ENCODE measurements at regions of chr1 and their contacts with region 1.

Region 1: GRCh38 chr1:26695356-26696118 is at the start of gene ARID1A:
- DNase-seq: peak; percentile 93 to 98 (median 95)
- ATAC-seq: peak; percentile 60
- H3K4me3 ChIP-seq: peak within 1 kb of the TSS; percentile 89
- H3K4me3 Mint-ChIP-seq: peak within 1 kb of the TSS; percentile 92
- H3K27ac ChIP-seq: peak within 1 kb of the TSS; percentile 71 to 88
- H3K27ac Mint-ChIP-seq: peak within 1 kb of the TSS; percentile 96
- H3K4me1 ChIP-seq: peaks cover 40% of the 10 kb centered on the region
- H3K4me1 Mint-ChIP-seq: peaks cover 36% of the 10 kb centered on the region
- H3K27me3 ChIP-seq: no peaks in the 10 kb centered on the region
- H3K27me3 Mint-ChIP-seq: no peaks in the 10 kb centered on the region
- CTCF ChIP-seq: no peak
- total RNA-seq, gene ARID1A: 102 to 103 TPM

Region 2: DNA sequence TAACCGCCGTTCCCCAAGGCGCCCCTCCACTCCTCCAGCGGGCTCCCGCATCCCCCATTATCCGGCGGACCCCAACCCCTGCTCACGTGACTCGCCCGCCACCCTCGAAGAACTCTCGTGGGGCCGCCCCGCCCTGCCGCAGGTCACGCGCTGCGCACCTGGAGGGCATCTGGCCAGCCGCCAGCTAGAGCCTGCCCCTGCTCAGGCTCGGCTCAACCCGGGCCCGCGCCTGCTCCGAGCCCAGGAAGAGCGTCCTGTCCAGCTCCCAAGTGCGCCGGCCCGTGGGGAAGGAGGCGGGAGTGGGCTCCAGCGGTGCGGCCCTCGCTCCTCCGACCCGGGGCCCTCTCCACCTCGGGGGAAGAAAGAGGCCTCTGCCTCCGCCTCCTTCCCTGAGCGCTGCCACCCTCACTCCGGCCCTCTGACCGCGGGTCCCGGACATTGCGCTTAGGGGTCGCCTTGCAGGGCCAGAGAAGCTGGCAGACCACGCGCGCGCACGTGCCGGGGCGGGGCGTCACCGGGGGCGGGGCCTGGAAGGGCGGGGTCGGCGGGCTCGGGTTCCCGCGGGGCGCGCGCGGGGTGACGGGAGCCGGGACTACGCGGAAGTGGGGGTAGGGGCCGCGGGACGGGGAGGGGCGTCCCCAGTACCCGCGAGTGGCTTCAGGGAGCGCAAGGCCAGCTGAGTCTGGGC is 194.9 kb before region 1 on chr1:
- CTCF ChIA-PET with region 1: interaction called, 3 read pairs
- POLR2A ChIA-PET with region 1: interaction called, 17 read pairs
- intact Hi-C with region 1: loop called in 1 of 2 experiments (anchors 2 kb)
- DNase-seq: peak; percentile 77 to 94 (median 88)
- ATAC-seq: peak; percentile 71
- H3K4me3 ChIP-seq: peak overlapping the region; percentile 76
- H3K4me3 Mint-ChIP-seq: peak overlapping the region; percentile 81
- H3K27ac ChIP-seq: peak overlapping the region; percentile 91 to 94
- H3K27ac Mint-ChIP-seq: peak overlapping the region; percentile 73
- H3K4me1 ChIP-seq: peaks cover 27% of the 10 kb centered on the region
- H3K4me1 Mint-ChIP-seq: peaks cover 14% of the 10 kb centered on the region
- H3K27me3 ChIP-seq: no peaks in the 10 kb centered on the region
- H3K27me3 Mint-ChIP-seq: no peaks in the 10 kb centered on the region
- CTCF ChIP-seq: peak; percentile 54

Region 3: GRCh38 chr1:26677306-26678115 is 18.0 kb before region 1 on chr1:
- CTCF ChIA-PET with region 1: interaction called, 55 read pairs
- POLR2A ChIA-PET with region 1: interaction called, 34 read pairs
- intact Hi-C with region 1: loop called in 1 of 2 experiments (anchors 2 kb)
- DNase-seq: peak in 13 of 14 experiments; percentile 28 to 87 (median 50)
- ATAC-seq: peak; percentile 94
- H3K4me3 ChIP-seq: no peak overlapping the region
- H3K4me3 Mint-ChIP-seq: peak overlapping the region; percentile 42
- H3K27ac ChIP-seq: no peak overlapping the region
- H3K27ac Mint-ChIP-seq: no peak overlapping the region
- H3K4me1 ChIP-seq: peaks cover 13% of the 10 kb centered on the region
- H3K4me1 Mint-ChIP-seq: peaks cover 19% of the 10 kb centered on the region
- H3K27me3 ChIP-seq: no peaks in the 10 kb centered on the region
- H3K27me3 Mint-ChIP-seq: no peaks in the 10 kb centered on the region
- CTCF ChIP-seq: peak; percentile 53

Region 4: DNA sequence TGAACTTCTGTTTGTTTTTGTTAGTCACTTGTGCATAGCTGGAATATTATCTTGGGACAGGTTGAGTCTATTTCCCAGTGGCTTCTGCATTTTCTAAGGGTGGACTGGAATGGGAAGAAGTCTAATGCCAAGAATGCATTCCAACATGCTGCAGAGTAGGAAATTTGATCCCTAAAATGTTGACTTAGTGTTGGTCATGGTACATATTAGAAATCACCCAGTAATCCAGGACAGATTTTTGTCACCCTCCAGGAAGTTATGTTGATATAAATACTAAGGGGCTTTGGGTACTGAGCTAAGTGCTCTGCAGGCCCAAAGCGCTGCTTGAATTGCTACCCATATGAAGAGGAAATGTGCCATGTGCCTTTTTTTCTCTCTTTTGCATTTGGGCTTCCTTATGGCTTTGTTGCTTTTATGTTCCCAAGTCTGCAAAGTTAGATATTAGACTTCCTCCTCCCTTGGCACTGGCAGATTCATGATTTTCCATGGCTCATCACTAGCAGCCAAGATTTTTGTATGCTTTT is 10.3 kb after region 1 on chr1:
- CTCF ChIA-PET with region 1: interaction called, 7 read pairs
- POLR2A ChIA-PET with region 1: interaction called, 58 read pairs
- intact Hi-C with region 1: no loop called
- DNase-seq: no peak
- ATAC-seq: no peak
- H3K4me3 ChIP-seq: no peak overlapping the region
- H3K4me3 Mint-ChIP-seq: peak overlapping the region; percentile 57
- H3K27ac ChIP-seq: no peak overlapping the region
- H3K27ac Mint-ChIP-seq: peak overlapping the region; percentile 56
- H3K4me1 ChIP-seq: peaks cover 72% of the 10 kb centered on the region
- H3K4me1 Mint-ChIP-seq: peaks cover 42% of the 10 kb centered on the region
- H3K27me3 ChIP-seq: no peaks in the 10 kb centered on the region
- H3K27me3 Mint-ChIP-seq: no peaks in the 10 kb centered on the region
- CTCF ChIP-seq: no peak

Region 5: GRCh38 chr1:26728645-26729044 is 33.1 kb after region 1 on chr1:
- CTCF ChIA-PET with region 1: interaction called, 12 read pairs
- POLR2A ChIA-PET with region 1: interaction called, 29 read pairs
- intact Hi-C with region 1: no loop called
- DNase-seq: no peak
- ATAC-seq: no peak
- H3K4me3 ChIP-seq: no peak overlapping the region
- H3K4me3 Mint-ChIP-seq: no peak overlapping the region
- H3K27ac ChIP-seq: peak overlapping the region in 1 of 2 donors; percentile 31
- H3K27ac Mint-ChIP-seq: peak overlapping the region; percentile 85
- H3K4me1 ChIP-seq: peaks cover 59% of the 10 kb centered on the region
- H3K4me1 Mint-ChIP-seq: peaks cover 99% of the 10 kb centered on the region
- H3K27me3 ChIP-seq: no peaks in the 10 kb centered on the region
- H3K27me3 Mint-ChIP-seq: no peaks in the 10 kb centered on the region
- CTCF ChIP-seq: no peak

Region 6: GRCh38 chr1:26744075-26744959 is 48.8 kb after region 1 on chr1:
- CTCF ChIA-PET with region 1: interaction called, 7 read pairs
- POLR2A ChIA-PET with region 1: interaction called, 202 read pairs
- intact Hi-C with region 1: loop called (anchors 2 kb)
- DNase-seq: peak; percentile 53 to 96 (median 70)
- ATAC-seq: peak; percentile 94
- H3K4me3 ChIP-seq: peak overlapping the region; percentile 27
- H3K4me3 Mint-ChIP-seq: peak overlapping the region; percentile 57
- H3K27ac ChIP-seq: peak overlapping the region; percentile 72 to 80
- H3K27ac Mint-ChIP-seq: peak overlapping the region; percentile 87
- H3K4me1 ChIP-seq: peaks cover 88% of the 10 kb centered on the region
- H3K4me1 Mint-ChIP-seq: peaks cover 89% of the 10 kb centered on the region
- H3K27me3 ChIP-seq: no peaks in the 10 kb centered on the region
- H3K27me3 Mint-ChIP-seq: no peaks in the 10 kb centered on the region
- CTCF ChIP-seq: no peak

Region 7: DNA sequence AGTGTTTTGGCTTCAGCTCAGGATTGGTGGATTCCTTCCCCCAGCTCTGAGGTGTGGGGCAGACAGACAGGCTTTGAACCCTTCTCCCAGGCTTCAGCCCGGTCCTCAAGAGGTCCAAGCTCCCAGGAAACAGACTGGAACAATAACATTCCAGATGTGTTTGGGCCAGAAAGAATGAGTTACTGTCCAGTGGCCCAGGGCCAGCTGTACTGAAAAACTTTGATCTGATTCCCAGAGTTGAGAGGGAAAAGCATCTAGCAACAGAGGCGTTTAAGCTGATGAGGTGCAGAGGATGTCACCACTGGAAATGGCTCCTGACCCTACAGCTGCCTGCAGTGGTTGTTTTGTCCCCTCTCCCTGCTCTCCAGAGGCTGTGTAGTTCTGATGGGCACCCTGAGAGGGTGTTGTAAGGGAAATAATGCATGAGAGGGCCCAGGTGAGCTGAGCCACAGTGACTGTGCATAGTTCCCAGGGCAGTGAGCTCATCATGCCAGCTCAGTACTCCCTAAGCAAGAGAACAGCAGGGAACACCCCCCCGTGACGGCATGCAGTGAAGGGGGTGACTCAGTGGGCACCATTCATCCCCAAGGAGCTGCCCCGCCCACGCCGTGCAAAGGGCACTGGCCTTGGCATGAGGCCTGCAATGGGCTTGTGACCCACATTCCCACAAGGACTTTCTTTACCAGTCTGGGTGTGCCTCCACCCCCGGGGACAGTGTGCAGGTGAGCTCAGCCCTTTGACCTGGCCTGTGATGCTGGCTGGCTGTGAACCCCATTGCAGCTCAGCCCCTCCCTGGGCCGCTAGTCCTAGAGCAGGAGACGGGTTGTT is 153.6 kb after region 1 on chr1:
- CTCF ChIA-PET with region 1: no interaction called
- POLR2A ChIA-PET with region 1: no interaction called
- intact Hi-C with region 1: no loop called
- DNase-seq: no peak
- ATAC-seq: no peak
- H3K4me3 ChIP-seq: no peak overlapping the region
- H3K4me3 Mint-ChIP-seq: no peak overlapping the region
- H3K27ac ChIP-seq: no peak overlapping the region
- H3K27ac Mint-ChIP-seq: no peak overlapping the region
- H3K4me1 ChIP-seq: no peaks in the 10 kb centered on the region
- H3K4me1 Mint-ChIP-seq: peaks cover 12% of the 10 kb centered on the region
- H3K27me3 ChIP-seq: no peaks in the 10 kb centered on the region
- H3K27me3 Mint-ChIP-seq: no peaks in the 10 kb centered on the region
- CTCF ChIP-seq: no peak

Region 8: DNA sequence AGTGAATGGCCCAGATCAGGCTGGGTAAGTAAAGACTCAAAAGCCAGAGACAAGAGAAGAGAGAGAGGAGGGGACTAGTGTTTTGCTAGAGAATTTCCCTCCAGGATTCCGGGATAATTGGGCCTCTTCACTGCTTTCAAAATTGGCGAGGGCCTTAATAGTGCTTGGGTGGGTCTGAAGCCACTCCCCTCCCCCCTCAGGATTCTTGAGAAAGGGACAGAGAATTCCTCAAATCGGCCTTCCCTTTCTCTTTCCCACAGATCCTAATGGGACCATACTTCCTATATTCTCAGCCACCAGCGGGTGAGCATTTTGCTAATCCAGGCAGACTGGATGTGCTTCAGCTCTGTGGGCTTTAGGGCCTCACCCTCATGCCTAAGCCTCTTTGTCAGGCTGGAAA is 179.4 kb after region 1 on chr1:
- CTCF ChIA-PET with region 1: no interaction called
- POLR2A ChIA-PET with region 1: no interaction called
- intact Hi-C with region 1: no loop called
- DNase-seq: no peak
- ATAC-seq: no peak
- H3K4me3 ChIP-seq: no peak overlapping the region
- H3K4me3 Mint-ChIP-seq: no peak overlapping the region
- H3K27ac ChIP-seq: no peak overlapping the region
- H3K27ac Mint-ChIP-seq: no peak overlapping the region
- H3K4me1 ChIP-seq: no peaks in the 10 kb centered on the region
- H3K4me1 Mint-ChIP-seq: no peaks in the 10 kb centered on the region
- H3K27me3 ChIP-seq: no peaks in the 10 kb centered on the region
- H3K27me3 Mint-ChIP-seq: no peaks in the 10 kb centered on the region
- CTCF ChIP-seq: no peak